A673 (cell line): ENCODE measurements at regions of chr5 and their contacts with region 1.

Region 1: GRCh38 chr5:171336521-171337209 is 27.6 kb downstream of the TLX3 start:
- DNase-seq: peak; percentile 57
- H3K4me3 ChIP-seq: peak overlapping the region; percentile 35
- H3K27ac ChIP-seq: no peak overlapping the region
- H3K4me1 ChIP-seq: no peaks in the 10 kb centered on the region
- H3K27me3 ChIP-seq: peaks cover 64% of the 10 kb centered on the region
- CTCF ChIP-seq: peak; percentile 75

Region 2: DNA sequence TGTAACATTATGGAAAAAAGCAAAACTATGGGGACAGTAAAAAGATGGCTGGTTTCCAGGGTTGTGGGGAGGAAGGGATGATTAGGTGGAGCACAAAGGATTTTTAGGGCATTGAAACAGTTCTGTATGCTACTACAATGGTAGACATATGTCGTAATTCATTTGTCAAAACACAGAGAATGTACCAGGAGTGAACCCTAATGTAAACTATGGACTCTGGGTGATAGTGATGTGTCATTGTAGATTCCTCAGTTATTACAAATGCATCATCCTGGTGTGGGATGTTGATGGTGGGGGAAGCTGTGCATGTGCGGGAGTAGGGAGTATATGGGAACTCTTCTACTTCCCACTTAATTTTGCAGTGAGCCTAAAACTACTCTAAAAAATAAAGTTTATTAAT is 688.1 kb before region 1 on chr5:
- CTCF ChIA-PET with region 1: no interaction called
- POLR2A ChIA-PET with region 1: no interaction called
- intact Hi-C with region 1: loop called (anchors 10 kb)
- DNase-seq: no peak
- H3K4me3 ChIP-seq: no peak overlapping the region
- H3K27ac ChIP-seq: no peak overlapping the region
- H3K4me1 ChIP-seq: no peaks in the 10 kb centered on the region
- H3K27me3 ChIP-seq: peaks cover 4% of the 10 kb centered on the region
- CTCF ChIP-seq: no peak

Region 3: GRCh38 chr5:170747851-170748250 is 588.8 kb before region 1 on chr5:
- CTCF ChIA-PET with region 1: no interaction called
- POLR2A ChIA-PET with region 1: no interaction called
- intact Hi-C with region 1: loop called (anchors 1 kb)
- DNase-seq: no peak
- H3K4me3 ChIP-seq: no peak overlapping the region
- H3K27ac ChIP-seq: no peak overlapping the region
- H3K4me1 ChIP-seq: no peaks in the 10 kb centered on the region
- H3K27me3 ChIP-seq: peaks cover 24% of the 10 kb centered on the region
- CTCF ChIP-seq: peak; percentile 30; the same call in 1 of the 2 replicates

Region 4: GRCh38 chr5:171207256-171207847 is 129.3 kb before region 1 on chr5:
- CTCF ChIA-PET with region 1: interaction called, 3 read pairs
- POLR2A ChIA-PET with region 1: no interaction called
- intact Hi-C with region 1: loop called (anchors 1 kb)
- DNase-seq: peak; percentile 52
- H3K4me3 ChIP-seq: no peak overlapping the region
- H3K27ac ChIP-seq: no peak overlapping the region
- H3K4me1 ChIP-seq: no peaks in the 10 kb centered on the region
- H3K27me3 ChIP-seq: peaks cover 58% of the 10 kb centered on the region
- CTCF ChIP-seq: peak; percentile 59

Region 5: GRCh38 chr5:171272996-171273970 is 63.4 kb before region 1 on chr5:
- CTCF ChIA-PET with region 1: no interaction called
- POLR2A ChIA-PET with region 1: no interaction called
- intact Hi-C with region 1: loop called (anchors 5 kb)
- DNase-seq: no peak
- H3K4me3 ChIP-seq: no peak overlapping the region
- H3K27ac ChIP-seq: no peak overlapping the region
- H3K4me1 ChIP-seq: no peaks in the 10 kb centered on the region
- H3K27me3 ChIP-seq: no peaks in the 10 kb centered on the region
- CTCF ChIP-seq: peak; percentile 34

Region 6: GRCh38 chr5:171709918-171710317 is 373.3 kb after region 1 on chr5:
- CTCF ChIA-PET with region 1: no interaction called
- POLR2A ChIA-PET with region 1: no interaction called
- intact Hi-C with region 1: no loop called
- DNase-seq: no peak
- H3K4me3 ChIP-seq: no peak overlapping the region
- H3K27ac ChIP-seq: no peak overlapping the region
- H3K4me1 ChIP-seq: no peaks in the 10 kb centered on the region
- H3K27me3 ChIP-seq: no peaks in the 10 kb centered on the region
- CTCF ChIP-seq: no peak

Region 7: DNA sequence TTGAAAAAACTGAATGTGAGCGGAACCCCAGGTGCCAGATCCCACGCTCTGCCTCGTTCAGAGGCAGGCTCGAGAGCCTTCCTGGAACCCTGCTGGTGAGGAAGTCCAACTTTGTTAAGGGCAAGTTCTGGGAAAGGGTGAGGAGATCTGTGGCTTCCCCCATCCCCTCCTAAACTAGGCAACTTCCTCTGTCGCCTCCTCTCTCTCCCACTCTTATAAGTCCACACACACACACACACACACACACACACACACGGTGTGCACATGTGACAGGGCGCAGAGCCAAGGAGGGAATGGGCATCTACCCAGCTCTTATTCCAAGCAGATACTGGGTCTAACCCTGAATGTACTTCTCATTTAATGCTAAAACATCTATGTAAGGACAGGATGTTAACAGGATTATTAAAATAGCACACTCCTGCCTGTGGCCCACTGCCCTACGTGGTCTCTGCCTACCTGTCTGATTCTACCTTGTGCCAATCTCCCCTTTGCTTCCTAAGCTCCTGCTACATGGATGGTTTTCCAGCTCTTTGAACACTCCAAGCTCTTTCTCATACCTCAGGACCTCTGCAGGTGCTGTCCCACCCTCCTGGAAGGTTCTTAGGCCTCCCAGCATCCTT is 742.2 kb after region 1 on chr5:
- CTCF ChIA-PET with region 1: no interaction called
- POLR2A ChIA-PET with region 1: no interaction called
- intact Hi-C with region 1: no loop called
- DNase-seq: no peak
- H3K4me3 ChIP-seq: no peak overlapping the region
- H3K27ac ChIP-seq: no peak overlapping the region
- H3K4me1 ChIP-seq: no peaks in the 10 kb centered on the region
- H3K27me3 ChIP-seq: no peaks in the 10 kb centered on the region
- CTCF ChIP-seq: no peak